Panc1 (cell line): ENCODE measurements at regions of chr2 and their contacts with region 1.

Region 1: GRCh38 chr2:234257856-234258561 is 207.5 kb downstream of the SPP2 start:
- DNase-seq: peak; percentile 94
- ATAC-seq: peak; percentile 98
- H3K4me3 ChIP-seq: no peak overlapping the region
- H3K27ac ChIP-seq: peak overlapping the region; percentile 99
- H3K4me1 ChIP-seq: peaks cover 45% of the 10 kb centered on the region
- H3K27me3 ChIP-seq: no peaks in the 10 kb centered on the region
- CTCF ChIP-seq: peak; percentile 82

Region 2: DNA sequence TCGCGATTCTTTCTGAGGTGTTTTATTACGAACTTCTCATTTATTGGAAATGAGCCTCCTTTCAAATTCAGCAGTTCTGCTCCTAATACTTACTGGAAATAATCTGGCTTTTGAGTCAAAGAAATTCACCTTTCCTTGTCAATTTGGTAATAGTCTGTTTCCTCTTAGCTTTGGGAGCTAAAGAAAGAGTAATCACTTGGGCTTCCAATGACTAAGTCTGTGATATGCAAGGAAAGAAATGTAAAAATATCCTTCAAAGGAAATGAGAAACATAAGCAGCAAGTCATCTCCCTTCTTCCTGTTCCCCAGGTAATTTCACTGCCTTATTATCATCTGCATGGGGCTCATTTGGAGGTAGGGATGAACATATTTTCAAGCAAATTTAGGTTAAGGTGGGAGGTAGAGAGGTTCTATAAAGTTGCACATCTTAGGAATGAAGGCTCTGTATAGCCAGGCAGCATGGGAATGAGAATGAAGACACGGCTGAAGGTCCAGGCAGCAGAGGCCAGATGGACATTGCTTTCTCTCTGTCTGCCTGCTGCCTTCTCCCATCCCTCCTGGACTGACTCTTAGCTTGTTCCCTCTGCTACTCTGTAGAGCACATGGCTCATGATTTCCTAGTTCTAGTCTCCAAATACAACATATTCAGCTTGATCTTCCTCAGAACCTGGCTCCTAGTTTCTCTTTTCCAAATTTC is 206.5 kb before region 1 on chr2:
- CTCF ChIA-PET with region 1: no interaction called
- POLR2A ChIA-PET with region 1: no interaction called
- in situ Hi-C with region 1: no loop called
- intact Hi-C with region 1: no loop called
- DNase-seq: no peak
- ATAC-seq: no peak
- H3K4me3 ChIP-seq: no peak overlapping the region
- H3K27ac ChIP-seq: peak overlapping the region; percentile 2; the same call in 1 of the 2 replicates
- H3K4me1 ChIP-seq: no peaks in the 10 kb centered on the region
- H3K27me3 ChIP-seq: no peaks in the 10 kb centered on the region
- CTCF ChIP-seq: no peak

Region 3: GRCh38 chr2:234218266-234219180 is 39.5 kb before region 1 on chr2:
- CTCF ChIA-PET with region 1: no interaction called
- POLR2A ChIA-PET with region 1: no interaction called
- in situ Hi-C with region 1: no loop called
- intact Hi-C with region 1: no loop called
- DNase-seq: no peak
- ATAC-seq: 0 out of 2 replicates have a peak, but pooled peaks have one; percentile 45
- H3K4me3 ChIP-seq: no peak overlapping the region
- H3K27ac ChIP-seq: peak overlapping the region; percentile 62
- H3K4me1 ChIP-seq: peaks cover 14% of the 10 kb centered on the region; the same call in 1 of the 2 replicates
- H3K27me3 ChIP-seq: no peaks in the 10 kb centered on the region
- CTCF ChIP-seq: no peak

Region 4: GRCh38 chr2:234269769-234270204 is 11.8 kb after region 1 on chr2:
- CTCF ChIA-PET with region 1: no interaction called
- POLR2A ChIA-PET with region 1: no interaction called
- in situ Hi-C with region 1: no loop called
- intact Hi-C with region 1: no loop called
- DNase-seq: no peak
- ATAC-seq: 0 out of 2 replicates have a peak, but pooled peaks have one; percentile 38
- H3K4me3 ChIP-seq: no peak overlapping the region
- H3K27ac ChIP-seq: peak overlapping the region; percentile 73; the same call in 1 of the 2 replicates
- H3K4me1 ChIP-seq: no peaks in the 10 kb centered on the region; the same call in 1 of the 2 replicates
- H3K27me3 ChIP-seq: no peaks in the 10 kb centered on the region
- CTCF ChIP-seq: no peak

Region 5: DNA sequence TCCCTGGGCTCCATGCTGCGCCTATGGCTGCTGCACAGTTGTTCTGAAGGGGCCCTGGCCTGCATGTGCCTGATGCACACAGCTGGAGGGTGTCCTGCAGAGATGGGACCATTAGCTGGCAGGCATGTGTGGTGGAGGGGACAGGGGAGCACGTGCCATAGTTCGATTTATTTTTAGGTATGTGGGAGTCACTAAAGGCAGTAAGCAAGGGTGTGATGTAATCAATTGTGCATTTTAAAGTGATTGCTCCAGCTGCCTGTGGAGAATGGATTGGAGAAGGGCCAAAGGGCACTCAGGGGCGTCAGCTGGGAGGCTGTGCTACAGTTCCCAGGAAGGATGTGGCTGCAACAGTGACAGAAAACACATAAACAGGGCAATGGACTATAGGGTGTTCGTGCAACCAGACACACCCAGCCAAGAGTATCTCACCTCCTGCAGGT is 33.8 kb after region 1 on chr2:
- CTCF ChIA-PET with region 1: no interaction called
- POLR2A ChIA-PET with region 1: no interaction called
- in situ Hi-C with region 1: no loop called
- intact Hi-C with region 1: no loop called
- DNase-seq: no peak
- ATAC-seq: peak; percentile 19; the same call in 1 of the 2 replicates
- H3K4me3 ChIP-seq: no peak overlapping the region
- H3K27ac ChIP-seq: peak overlapping the region; percentile 85; the same call in 1 of the 2 replicates
- H3K4me1 ChIP-seq: peaks cover 15% of the 10 kb centered on the region
- H3K27me3 ChIP-seq: no peaks in the 10 kb centered on the region
- CTCF ChIP-seq: no peak

Region 6: GRCh38 chr2:234494361-234495250 is 236.6 kb after region 1 on chr2:
- CTCF ChIA-PET with region 1: no interaction called
- POLR2A ChIA-PET with region 1: no interaction called
- in situ Hi-C with region 1: no loop called
- intact Hi-C with region 1: loop called (anchors 5 kb)
- DNase-seq: no peak
- ATAC-seq: no peak
- H3K4me3 ChIP-seq: peak overlapping the region; percentile 72 to 97
- H3K27ac ChIP-seq: peak overlapping the region; percentile 91
- H3K4me1 ChIP-seq: peaks cover 38% of the 10 kb centered on the region
- H3K27me3 ChIP-seq: no peaks in the 10 kb centered on the region
- CTCF ChIP-seq: no peak

Region 7: GRCh38 chr2:235370606-235371005 is 1112.6 kb after region 1 on chr2:
- CTCF ChIA-PET with region 1: interaction called, 13 read pairs
- POLR2A ChIA-PET with region 1: no interaction called
- in situ Hi-C with region 1: no loop called
- intact Hi-C with region 1: no loop called
- DNase-seq: no peak
- ATAC-seq: no peak
- H3K4me3 ChIP-seq: no peak overlapping the region
- H3K27ac ChIP-seq: no peak overlapping the region
- H3K4me1 ChIP-seq: no peaks in the 10 kb centered on the region
- H3K27me3 ChIP-seq: peaks cover 5% of the 10 kb centered on the region
- CTCF ChIP-seq: no peak